Spleen (tissue), 13 donors: ENCODE measurements at regions of chr22 and their contacts with region 1.

Region 1: DNA sequence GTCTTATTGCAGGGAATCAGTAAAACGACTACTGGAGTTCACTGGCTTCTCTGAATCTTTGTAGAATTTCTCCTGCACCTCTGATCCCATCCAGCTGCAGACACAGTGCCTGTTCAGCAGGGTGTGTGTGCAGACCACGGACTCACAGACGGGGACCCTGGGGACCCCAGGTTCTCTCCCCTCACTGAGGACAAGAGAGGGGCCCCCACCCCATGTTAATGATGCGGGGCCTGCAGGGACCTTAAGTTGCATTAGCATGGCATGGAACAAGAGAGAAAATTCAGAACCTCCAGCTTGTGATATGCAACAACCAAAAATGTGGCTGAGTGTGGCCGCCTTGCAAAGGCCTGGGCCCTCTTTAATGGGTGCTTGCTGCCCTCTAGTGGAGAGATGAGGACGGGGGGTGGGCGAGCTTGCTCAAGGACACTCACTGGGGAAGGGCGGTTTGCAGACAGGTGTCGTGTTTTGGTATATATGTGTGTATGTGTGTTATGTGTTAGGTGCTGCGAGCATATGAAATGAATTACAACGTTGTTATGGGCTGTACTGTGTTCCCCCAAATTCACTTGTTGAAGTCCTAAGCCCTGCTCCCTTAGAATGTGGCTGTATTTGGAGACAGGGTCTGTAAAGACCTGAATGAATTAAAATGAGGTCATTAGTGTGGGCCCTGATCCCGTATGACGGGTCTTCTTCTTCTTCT is 84.4 kb upstream of the SEPTIN5 start:
- DNase-seq: peak; percentile 92
- H3K4me3 ChIP-seq: no peak overlapping the region
- H3K27ac ChIP-seq: no peak overlapping the region
- H3K4me1 ChIP-seq: peaks cover 0 to 10% (median 4%) of the 10 kb centered on the region in 6 donors
- H3K27me3 ChIP-seq: peaks cover 0 to 42% (median 0%) of the 10 kb centered on the region in 7 donors
- CTCF ChIP-seq: peak; percentile 83 to 97 (median 93)
- POLR2A ChIP-seq: no peak

Region 2: GRCh38 chr22:19495562-19496323 is 134.1 kb before region 1 on chr22:
- intact Hi-C with region 1: loop called (anchors 10 kb)
- DNase-seq: no peak
- H3K4me3 ChIP-seq: no peak overlapping the region
- H3K27ac ChIP-seq: no peak overlapping the region
- H3K4me1 ChIP-seq: no peaks in the 10 kb centered on the region
- H3K27me3 ChIP-seq: no peaks in the 10 kb centered on the region
- CTCF ChIP-seq: peak in 9 of 11 experiments; percentile 10 to 52 (median 34)
- POLR2A ChIP-seq: no peak

Region 3: DNA sequence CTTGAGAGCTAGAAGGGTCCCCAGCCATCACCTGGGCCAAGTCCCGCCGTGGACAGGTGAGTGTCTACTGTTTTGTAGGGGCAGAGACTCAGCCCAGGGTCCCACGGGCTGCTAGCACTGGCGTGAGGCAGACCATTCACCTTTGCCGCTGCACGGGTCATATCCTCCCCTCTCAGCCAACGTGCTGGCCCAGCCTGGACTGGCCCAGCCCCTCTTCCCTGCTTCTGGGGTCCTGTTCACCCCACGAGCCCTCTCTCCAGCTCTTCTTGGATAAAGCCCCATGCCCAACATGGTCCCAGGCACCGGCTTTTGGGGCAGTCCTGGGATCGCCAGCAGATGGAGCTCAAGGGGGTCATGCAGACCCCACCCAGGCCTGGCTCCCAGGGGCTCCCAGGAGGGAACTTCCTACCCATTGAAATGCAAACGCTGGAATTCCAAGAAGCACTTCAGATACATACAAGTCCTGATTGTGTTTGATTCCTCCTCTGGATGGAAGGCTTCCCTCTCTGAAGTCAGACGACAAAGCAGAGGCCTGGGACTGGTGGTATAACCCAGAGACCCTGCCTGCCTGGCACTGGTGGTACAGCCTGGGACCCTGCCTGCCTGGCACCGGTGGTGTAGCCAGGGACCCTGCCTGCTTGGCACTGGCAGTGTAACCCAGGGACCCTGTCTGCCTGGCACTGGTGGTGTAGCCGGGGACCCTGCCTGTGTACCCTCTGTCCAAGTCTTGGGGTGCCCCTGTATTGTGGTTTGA is 75.5 kb after region 1 on chr22:
- intact Hi-C with region 1: no loop called
- DNase-seq: peak; percentile 41
- H3K4me3 ChIP-seq: no peak overlapping the region
- H3K27ac ChIP-seq: no peak overlapping the region
- H3K4me1 ChIP-seq: peaks cover 0 to 20% (median 2%) of the 10 kb centered on the region in 6 donors
- H3K27me3 ChIP-seq: peaks cover 0 to 84% (median 12%) of the 10 kb centered on the region in 7 donors
- CTCF ChIP-seq: no peak
- POLR2A ChIP-seq: no peak